Activated CD4-positive, alpha-beta T cell treated with anti-CD3 and anti-CD28 coated beads for 36 hours (primary cell): ENCODE measurements at regions of chr11 and their contacts with region 1.

Region 1: DNA sequence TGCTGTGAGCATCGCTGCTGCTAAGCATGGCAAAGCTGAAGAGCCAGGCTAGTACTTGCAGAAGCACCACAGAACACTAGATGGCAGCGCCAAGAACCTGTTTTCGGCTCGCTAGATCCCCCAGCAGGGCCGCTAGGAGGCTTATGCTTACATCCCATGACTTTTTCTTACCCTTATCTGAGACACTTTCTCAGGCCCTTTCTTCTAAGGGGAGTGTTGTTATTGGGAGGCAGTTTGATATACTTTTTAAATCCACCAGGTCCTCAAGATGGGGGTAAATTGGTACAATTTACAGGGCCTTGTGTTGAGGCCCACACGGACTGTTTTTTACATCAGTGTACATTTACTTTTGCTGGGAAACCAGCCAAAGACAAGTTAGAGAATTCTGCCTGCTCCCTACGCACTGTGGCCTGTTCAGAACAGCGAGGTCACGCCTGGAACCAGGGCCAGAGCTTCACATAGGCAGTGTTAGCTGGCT is 4.0 kb downstream of the TRIM6 start:
- DNase-seq: peak; percentile 78
- ATAC-seq: peak; percentile 93
- H3K4me3 Mint-ChIP-seq: no peak overlapping the region
- H3K27ac Mint-ChIP-seq: no peak overlapping the region
- H3K4me1 Mint-ChIP-seq: peaks cover 6% of the 10 kb centered on the region
- H3K27me3 Mint-ChIP-seq: peaks cover 15% of the 10 kb centered on the region

Region 2: DNA sequence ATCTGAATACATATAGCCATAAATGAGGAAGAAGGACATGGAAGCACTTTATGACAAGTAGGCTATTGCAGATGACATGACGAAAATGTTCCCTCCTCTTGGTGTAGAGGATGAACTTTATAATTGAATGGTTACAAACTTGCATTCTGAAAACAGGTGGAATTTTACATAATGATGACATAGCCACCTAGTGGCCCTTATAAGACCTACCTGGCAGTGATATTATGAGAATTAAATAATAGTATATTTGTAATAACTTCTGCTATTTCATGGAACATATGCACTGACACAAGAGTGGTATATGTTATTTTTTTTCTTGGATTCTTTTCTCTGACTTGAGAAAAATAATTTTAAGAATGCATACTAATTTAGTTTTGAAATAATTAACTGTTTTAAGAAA is 112.1 kb after region 1 on chr11:
- CTCF ChIA-PET with region 1: interaction called, 7 read pairs
- POLR2A ChIA-PET with region 1: no interaction called
- intact Hi-C with region 1: loop called in 1 of 2 experiments (anchors 1 kb)
- DNase-seq: no peak
- ATAC-seq: peak; percentile 49
- H3K4me3 Mint-ChIP-seq: no peak overlapping the region
- H3K27ac Mint-ChIP-seq: no peak overlapping the region
- H3K4me1 Mint-ChIP-seq: peaks cover 3% of the 10 kb centered on the region
- H3K27me3 Mint-ChIP-seq: no peaks in the 10 kb centered on the region

Region 3: GRCh38 chr11:5796541-5796940 is 196.1 kb after region 1 on chr11:
- CTCF ChIA-PET with region 1: no interaction called
- POLR2A ChIA-PET with region 1: no interaction called
- intact Hi-C with region 1: no loop called
- DNase-seq: no peak
- ATAC-seq: no peak
- H3K4me3 Mint-ChIP-seq: no peak overlapping the region
- H3K27ac Mint-ChIP-seq: no peak overlapping the region
- H3K4me1 Mint-ChIP-seq: no peaks in the 10 kb centered on the region
- H3K27me3 Mint-ChIP-seq: peaks cover 20% of the 10 kb centered on the region

Region 4: GRCh38 chr11:5808500-5809121 is 208.2 kb after region 1 on chr11 and contains the start of gene OR52N2:
- CTCF ChIA-PET with region 1: interaction called, 5 read pairs
- POLR2A ChIA-PET with region 1: no interaction called
- intact Hi-C with region 1: loop called (anchors 1 kb)
- DNase-seq: peak; percentile 82
- ATAC-seq: peak; percentile 92
- H3K4me3 Mint-ChIP-seq: peak within 1 kb of the TSS; percentile 79
- H3K27ac Mint-ChIP-seq: peak within 1 kb of the TSS; percentile 23
- H3K4me1 Mint-ChIP-seq: peaks cover 8% of the 10 kb centered on the region
- H3K27me3 Mint-ChIP-seq: peaks cover 16% of the 10 kb centered on the region
- total RNA-seq, gene OR52N2: not detected

Region 5: DNA sequence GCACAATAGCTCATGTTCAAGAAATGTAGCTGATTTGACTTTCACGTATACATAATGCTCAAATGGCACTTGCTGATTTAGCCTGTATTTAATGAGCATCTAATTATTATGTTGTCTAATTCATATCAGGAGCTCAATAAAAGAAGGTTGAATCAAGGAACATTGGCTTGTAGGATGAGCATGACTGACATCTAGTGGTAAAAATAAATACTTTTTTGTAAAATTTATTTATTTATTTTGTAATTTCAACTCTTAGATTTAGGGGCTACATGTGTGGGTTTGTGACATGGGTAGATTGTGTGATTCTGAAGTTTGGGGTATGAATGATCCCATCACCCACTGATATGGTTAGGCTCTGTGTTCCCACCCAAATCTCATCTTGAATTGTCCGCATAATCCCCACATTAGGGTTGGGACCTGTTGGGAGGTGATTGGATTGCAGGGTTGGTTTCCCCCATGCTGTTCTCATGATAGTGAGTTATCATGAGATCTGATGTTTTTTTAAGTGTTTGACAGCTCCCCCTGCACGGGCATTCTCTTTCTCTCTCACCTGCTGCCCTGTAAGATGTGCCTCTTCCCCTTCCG is 290.9 kb after region 1 on chr11:
- CTCF ChIA-PET with region 1: interaction called, 3 read pairs
- POLR2A ChIA-PET with region 1: no interaction called
- intact Hi-C with region 1: loop called in 1 of 2 experiments (anchors 2 kb)
- DNase-seq: no peak
- ATAC-seq: no peak
- H3K4me3 Mint-ChIP-seq: no peak overlapping the region
- H3K27ac Mint-ChIP-seq: no peak overlapping the region
- H3K4me1 Mint-ChIP-seq: no peaks in the 10 kb centered on the region
- H3K27me3 Mint-ChIP-seq: peaks cover 5% of the 10 kb centered on the region